ENCODE measurements at regions of chr1 and their contacts with region 1.

Region 1: GRCh38 chr1:93814059-93814794 is 64.8 kb downstream of the DNTTIP2 start:
- DNase-seq: peak; percentile 72
- H3K4me3 Mint-ChIP-seq: no peak overlapping the region
- H3K27ac Mint-ChIP-seq: no peak overlapping the region
- H3K4me1 Mint-ChIP-seq: peaks cover 21% of the 10 kb centered on the region
- H3K27me3 Mint-ChIP-seq: no peaks in the 10 kb centered on the region

Region 2: GRCh38 chr1:93846211-93846991 is 32.2 kb after region 1 on chr1:
- CTCF ChIA-PET with region 1: interaction called, 73 read pairs
- DNase-seq: peak; percentile 86
- H3K4me3 Mint-ChIP-seq: peak overlapping the region; percentile 88
- H3K27ac Mint-ChIP-seq: peak overlapping the region; percentile 96
- H3K4me1 Mint-ChIP-seq: peaks cover 31% of the 10 kb centered on the region
- H3K27me3 Mint-ChIP-seq: peaks cover 19% of the 10 kb centered on the region

Region 3: GRCh38 chr1:93980320-93981273 is 166.4 kb after region 1 on chr1:
- CTCF ChIA-PET with region 1: no interaction called
- DNase-seq: no peak
- H3K4me3 Mint-ChIP-seq: no peak overlapping the region
- H3K27ac Mint-ChIP-seq: no peak overlapping the region
- H3K4me1 Mint-ChIP-seq: no peaks in the 10 kb centered on the region
- H3K27me3 Mint-ChIP-seq: peaks cover 5% of the 10 kb centered on the region